Esophagus muscularis mucosa (tissue), 4 donors: ENCODE measurements at regions of chr12 and their contacts with region 1.

Region 1: GRCh38 chr12:107093417-107094182 is at the start of gene CRY1:
- DNase-seq: peak; percentile 99
- H3K4me3 ChIP-seq: peak within 1 kb of the TSS; percentile 80 to 93 (median 89)
- H3K27ac ChIP-seq: peak within 1 kb of the TSS; percentile 97 to 100 (median 98)
- H3K4me1 ChIP-seq: peaks cover 18 to 40% (median 34%) of the 10 kb centered on the region in 4 donors
- H3K27me3 ChIP-seq: no peaks in the 10 kb centered on the region
- CTCF ChIP-seq: no peak
- EP300 ChIP-seq: no peak
- POLR2A ChIP-seq: peak; percentile 94
- total RNA-seq, gene CRY1: 29.1 to 42.9 (median 34.9) TPM

Region 2: GRCh38 chr12:106774005-106774807 is 319.4 kb before region 1 on chr12 and contains the start of gene RIC8B:
- intact Hi-C with region 1: loop called (anchors 2 kb)
- DNase-seq: peak; percentile 98
- H3K4me3 ChIP-seq: peak within 1 kb of the TSS; percentile 80 to 95 (median 88)
- H3K27ac ChIP-seq: peak within 1 kb of the TSS; percentile 91 to 97 (median 93)
- H3K4me1 ChIP-seq: peaks cover 14 to 21% (median 18%) of the 10 kb centered on the region in 4 donors
- H3K27me3 ChIP-seq: peaks cover 0 to 2% (median 0%) of the 10 kb centered on the region in 4 donors
- CTCF ChIP-seq: peak in 1 of 3 experiments; percentile 34
- EP300 ChIP-seq: no peak
- POLR2A ChIP-seq: peak; percentile 54
- total RNA-seq, gene RIC8B: 13.8 to 19.1 (median 15.3) TPM

Region 3: GRCh38 chr12:106955377-106956047 is 138.1 kb before region 1 on chr12 and contains the start of gene TMEM263:
- intact Hi-C with region 1: loop called (anchors 5 kb)
- DNase-seq: peak; percentile 97
- H3K4me3 ChIP-seq: peak within 1 kb of the TSS; percentile 82 to 95 (median 94)
- H3K27ac ChIP-seq: peak within 1 kb of the TSS; percentile 96 to 100 (median 98)
- H3K4me1 ChIP-seq: peaks cover 22 to 43% (median 37%) of the 10 kb centered on the region in 4 donors
- H3K27me3 ChIP-seq: no peaks in the 10 kb centered on the region
- CTCF ChIP-seq: no peak
- EP300 ChIP-seq: no peak
- POLR2A ChIP-seq: peak; percentile 82
- total RNA-seq, gene TMEM263: 31.1 to 39.9 (median 34.5) TPM

Region 4: DNA sequence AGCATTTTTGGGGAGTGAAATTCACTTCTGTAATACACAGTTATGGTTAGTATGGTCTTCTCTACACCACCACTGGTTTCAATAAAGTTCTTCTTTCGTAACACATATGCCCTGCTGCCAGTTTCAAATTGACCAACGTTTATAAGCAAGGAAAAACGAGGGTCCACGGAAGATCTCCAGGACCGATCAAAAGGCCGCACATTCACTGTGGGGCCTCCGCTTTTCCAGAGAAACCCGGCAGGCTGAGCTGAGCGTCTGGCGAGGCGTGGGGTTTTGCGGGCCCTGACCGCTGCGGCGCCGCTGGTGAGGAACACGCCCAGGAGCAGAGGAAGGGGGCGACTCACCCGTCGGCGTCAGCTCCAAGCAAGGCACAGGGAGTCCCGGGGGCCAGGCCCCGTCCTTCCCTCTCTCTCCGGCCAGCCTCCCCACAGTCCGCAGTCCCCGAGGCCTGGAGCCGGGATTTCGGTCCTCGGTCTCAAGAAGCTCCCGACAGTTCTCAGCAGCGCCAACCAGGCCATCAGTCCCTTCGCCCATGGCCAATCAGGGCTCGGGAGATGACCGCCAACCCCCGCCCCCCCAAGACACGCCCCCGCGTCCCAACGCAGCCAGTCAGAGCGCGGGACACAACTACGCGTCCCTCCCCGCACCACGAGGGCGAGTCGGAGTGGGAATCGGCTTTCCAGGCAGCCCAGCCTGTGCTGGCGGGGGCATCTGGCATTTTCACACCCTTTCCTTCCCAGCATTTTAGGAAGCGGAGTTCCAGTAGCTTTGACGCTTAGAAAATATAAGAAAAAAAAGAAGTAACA is 106.8 kb before region 1 on chr12 and contains the start of gene MTERF2:
- intact Hi-C with region 1: loop called (anchors 1 kb)
- DNase-seq: peak; percentile 99
- H3K4me3 ChIP-seq: peak within 1 kb of the TSS; percentile 60 to 76 (median 70)
- H3K27ac ChIP-seq: peak within 1 kb of the TSS; percentile 85 to 93 (median 93)
- H3K4me1 ChIP-seq: peaks cover 21 to 60% (median 55%) of the 10 kb centered on the region in 4 donors
- H3K27me3 ChIP-seq: no peaks in the 10 kb centered on the region
- CTCF ChIP-seq: no peak
- EP300 ChIP-seq: no peak
- POLR2A ChIP-seq: no peak
- total RNA-seq, gene MTERF2: 16.7 to 22.2 (median 19.0) TPM

Region 5: GRCh38 chr12:107033758-107034739 is 59.6 kb before region 1 on chr12:
- intact Hi-C with region 1: loop called (anchors 5 kb)
- DNase-seq: no peak
- H3K4me3 ChIP-seq: no peak overlapping the region
- H3K27ac ChIP-seq: peak overlapping the region in 1 of 4 donors; percentile 24
- H3K4me1 ChIP-seq: peaks cover 25 to 49% (median 39%) of the 10 kb centered on the region in 4 donors
- H3K27me3 ChIP-seq: no peaks in the 10 kb centered on the region
- CTCF ChIP-seq: no peak
- EP300 ChIP-seq: no peak
- POLR2A ChIP-seq: no peak

Region 6: DNA sequence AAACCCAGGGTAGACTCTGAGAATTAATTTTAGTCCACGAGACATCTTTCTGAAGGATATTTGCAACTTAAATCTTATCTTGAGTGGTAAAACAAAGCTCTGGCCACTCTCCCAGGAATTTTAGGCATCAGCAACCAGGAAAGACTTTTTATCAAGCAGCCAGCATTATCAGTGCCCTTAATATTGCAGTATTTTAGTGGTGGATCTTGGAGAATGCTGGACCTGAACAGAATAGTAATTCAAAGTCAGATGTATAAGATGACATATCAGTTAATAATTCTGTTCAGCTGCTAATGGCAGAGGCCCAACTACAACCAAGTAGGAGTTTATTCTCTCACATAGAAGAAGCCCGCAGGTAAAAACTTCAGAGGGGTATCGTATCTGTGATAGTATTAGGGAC is 58.7 kb after region 1 on chr12:
- intact Hi-C with region 1: no loop called
- DNase-seq: no peak
- H3K4me3 ChIP-seq: no peak overlapping the region
- H3K27ac ChIP-seq: no peak overlapping the region
- H3K4me1 ChIP-seq: no peaks in the 10 kb centered on the region
- H3K27me3 ChIP-seq: peaks cover 0 to 6% (median 0%) of the 10 kb centered on the region in 4 donors
- CTCF ChIP-seq: no peak
- EP300 ChIP-seq: no peak
- POLR2A ChIP-seq: no peak